ENCODE measurements at regions of chr21 and their contacts with region 1.

Region 1: DNA sequence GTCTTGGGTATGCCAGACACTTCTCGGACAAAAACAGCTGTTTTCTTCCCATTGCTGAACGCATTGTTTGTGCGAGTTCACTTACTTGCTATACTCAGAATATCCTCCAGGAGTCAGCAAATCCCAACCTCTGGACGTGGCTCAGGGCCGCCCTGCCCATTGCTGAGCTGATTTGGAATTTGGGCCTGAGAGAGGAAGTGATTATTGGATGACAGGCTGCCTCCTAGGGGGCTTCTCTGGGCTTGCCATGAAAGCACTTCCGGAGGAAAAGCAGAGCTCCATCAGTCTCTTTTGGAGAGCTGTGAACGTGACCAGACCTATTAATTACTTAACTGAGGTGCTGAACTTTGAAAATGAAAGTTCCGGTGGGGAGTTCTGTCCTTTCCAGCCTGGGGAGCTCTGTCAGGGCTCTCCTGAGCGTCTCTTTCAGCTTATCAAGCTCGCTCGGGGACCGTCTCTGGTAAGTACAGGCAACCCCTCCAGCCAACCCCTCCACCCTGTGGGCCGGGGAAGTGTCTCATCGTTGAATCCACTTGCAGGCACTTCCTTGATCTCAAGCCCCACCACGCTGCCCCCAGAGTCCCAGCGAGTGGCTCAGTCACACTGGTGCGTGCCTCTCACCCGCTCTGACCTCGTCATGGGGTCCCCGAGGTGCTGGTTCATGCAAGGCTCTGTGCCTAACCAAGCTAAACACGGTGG is 76.9 kb downstream of the CLIC6 start:
- DNase-seq: peak in 32 of 35 experiments; percentile 7 to 74 (median 22)
- ATAC-seq: peak; percentile 69 to 82 (median 74)
- H3K4me3 ChIP-seq: peak overlapping the region in 1 of 2 donors; percentile 4
- H3K4me3 Mint-ChIP-seq: peak overlapping the region; percentile 21 to 38 (median 29)
- H3K27ac ChIP-seq: no peak overlapping the region
- H3K27ac Mint-ChIP-seq: no peak overlapping the region
- H3K4me1 ChIP-seq: peaks cover 0 to 7% of the 10 kb centered on the region in 2 experiments
- H3K4me1 Mint-ChIP-seq: peaks cover 3 to 4% (median 4%) of the 10 kb centered on the region in 3 donors
- H3K27me3 ChIP-seq: peaks cover 0 to 19% of the 10 kb centered on the region in 2 experiments
- H3K27me3 Mint-ChIP-seq: peaks cover 10 to 13% of the 10 kb centered on the region in 2 donors

Region 2: GRCh38 chr21:35400233-35400957 is 654.7 kb after region 1 on chr21:
- CTCF ChIA-PET with region 1: interaction called, 3 to 18 read pairs
- POLR2A ChIA-PET with region 1: no interaction called
- DNase-seq: peak in 29 of 35 experiments; percentile 0 to 80 (median 19)
- ATAC-seq: peak; percentile 81 to 94 (median 93)
- H3K4me3 ChIP-seq: no peak overlapping the region
- H3K4me3 Mint-ChIP-seq: no peak overlapping the region
- H3K27ac ChIP-seq: no peak overlapping the region
- H3K27ac Mint-ChIP-seq: no peak overlapping the region
- H3K4me1 ChIP-seq: peaks cover 0 to 9% of the 10 kb centered on the region in 2 experiments
- H3K4me1 Mint-ChIP-seq: peaks cover 0 to 21% (median 10%) of the 10 kb centered on the region in 3 donors
- H3K27me3 ChIP-seq: no peaks in the 10 kb centered on the region
- H3K27me3 Mint-ChIP-seq: peaks cover under 1 to 5% of the 10 kb centered on the region in 2 donors

Region 3: GRCh38 chr21:35840197-35840799 is 1094.6 kb after region 1 on chr21:
- CTCF ChIA-PET with region 1: interaction called, 9 to 32 read pairs
- POLR2A ChIA-PET with region 1: no interaction called
- DNase-seq: peak in 32 of 35 experiments; percentile 9 to 76 (median 39)
- ATAC-seq: peak in 1 of 4 experiments; percentile 33
- H3K4me3 ChIP-seq: no peak overlapping the region
- H3K4me3 Mint-ChIP-seq: no peak overlapping the region
- H3K27ac ChIP-seq: no peak overlapping the region
- H3K27ac Mint-ChIP-seq: no peak overlapping the region
- H3K4me1 ChIP-seq: peaks cover 0 to 3% of the 10 kb centered on the region in 2 experiments
- H3K4me1 Mint-ChIP-seq: peaks cover 4 to 6% (median 4%) of the 10 kb centered on the region in 3 donors
- H3K27me3 ChIP-seq: peaks cover 0 to 6% of the 10 kb centered on the region in 2 experiments
- H3K27me3 Mint-ChIP-seq: peaks cover 0 to 1% of the 10 kb centered on the region in 2 donors

Region 4: DNA sequence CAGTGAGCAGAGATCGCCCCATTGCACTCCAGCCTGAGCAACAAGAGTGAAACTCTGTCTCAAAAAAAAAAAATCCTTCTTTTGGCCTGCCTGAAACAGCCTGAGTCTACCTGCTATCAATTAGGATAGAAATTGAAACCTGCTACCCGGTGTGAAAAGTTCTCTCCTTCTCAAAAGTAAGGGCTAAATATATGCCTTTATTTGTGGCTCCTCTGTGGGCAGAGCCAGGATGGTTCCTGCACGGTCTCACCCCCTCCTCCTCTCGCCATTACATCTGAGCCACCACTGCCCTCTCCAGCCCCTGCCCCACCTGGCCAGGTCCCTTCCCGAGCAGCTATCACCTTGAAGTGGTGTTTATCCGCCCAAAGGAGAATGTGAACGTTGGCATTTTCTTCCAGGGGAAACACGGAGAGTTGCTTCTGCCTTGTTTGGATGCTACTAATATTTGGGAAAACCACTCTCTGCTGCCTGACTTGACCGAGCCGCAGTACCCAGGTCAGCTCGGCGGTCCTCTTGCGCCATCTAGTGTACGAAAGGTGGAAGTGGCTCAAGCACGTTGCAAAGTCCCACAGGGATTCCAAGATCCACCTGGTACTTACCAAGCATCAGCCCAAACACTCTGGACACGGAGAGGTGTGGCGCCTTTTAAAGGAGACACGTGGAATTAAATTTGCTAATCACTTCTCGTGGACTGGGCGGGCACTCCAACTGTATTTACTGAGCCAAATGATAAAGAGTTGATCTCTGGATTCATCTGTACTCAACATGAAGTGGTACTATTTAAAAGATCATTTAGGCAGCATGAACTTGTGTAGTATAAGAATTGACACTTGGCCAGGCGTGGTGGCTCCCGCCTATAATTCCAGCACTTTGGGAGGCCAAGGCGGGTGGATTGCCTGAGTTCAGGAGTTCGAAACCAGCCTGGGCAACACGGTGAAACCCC is 1282.7 kb after region 1 on chr21:
- CTCF ChIA-PET with region 1: interaction called in 1 of 2 experiments, 10 read pairs
- POLR2A ChIA-PET with region 1: no interaction called
- DNase-seq: peak; percentile 20 to 84 (median 48)
- ATAC-seq: peak; percentile 78 to 87 (median 84)
- H3K4me3 ChIP-seq: no peak overlapping the region
- H3K4me3 Mint-ChIP-seq: no peak overlapping the region
- H3K27ac ChIP-seq: no peak overlapping the region
- H3K27ac Mint-ChIP-seq: no peak overlapping the region
- H3K4me1 ChIP-seq: peaks cover 0 to 5% of the 10 kb centered on the region in 2 experiments
- H3K4me1 Mint-ChIP-seq: peaks cover 4 to 6% (median 6%) of the 10 kb centered on the region in 3 donors
- H3K27me3 ChIP-seq: peaks cover 0 to 2% of the 10 kb centered on the region in 2 experiments
- H3K27me3 Mint-ChIP-seq: no peaks in the 10 kb centered on the region

Measured in T-cell (primary cell).